Lower leg skin (tissue), 4 donors: ENCODE measurements at regions of chr14 and their contacts with region 1.

Region 1: GRCh38 chr14:99884834-99885648 is 91.8 kb downstream of the EML1 start:
- DNase-seq: no peak
- H3K4me3 ChIP-seq: no peak overlapping the region
- CTCF ChIP-seq: peak in 1 of 3 donors; percentile 15
- POLR2A ChIP-seq: no peak

Region 2: GRCh38 chr14:99518441-99519346 is 366.3 kb before region 1 on chr14:
- intact Hi-C with region 1: loop called (anchors 10 kb)
- DNase-seq: peak; percentile 61 to 95
- H3K4me3 ChIP-seq: no peak overlapping the region
- CTCF ChIP-seq: peak in 1 of 3 donors; percentile 89
- POLR2A ChIP-seq: no peak

Region 3: DNA sequence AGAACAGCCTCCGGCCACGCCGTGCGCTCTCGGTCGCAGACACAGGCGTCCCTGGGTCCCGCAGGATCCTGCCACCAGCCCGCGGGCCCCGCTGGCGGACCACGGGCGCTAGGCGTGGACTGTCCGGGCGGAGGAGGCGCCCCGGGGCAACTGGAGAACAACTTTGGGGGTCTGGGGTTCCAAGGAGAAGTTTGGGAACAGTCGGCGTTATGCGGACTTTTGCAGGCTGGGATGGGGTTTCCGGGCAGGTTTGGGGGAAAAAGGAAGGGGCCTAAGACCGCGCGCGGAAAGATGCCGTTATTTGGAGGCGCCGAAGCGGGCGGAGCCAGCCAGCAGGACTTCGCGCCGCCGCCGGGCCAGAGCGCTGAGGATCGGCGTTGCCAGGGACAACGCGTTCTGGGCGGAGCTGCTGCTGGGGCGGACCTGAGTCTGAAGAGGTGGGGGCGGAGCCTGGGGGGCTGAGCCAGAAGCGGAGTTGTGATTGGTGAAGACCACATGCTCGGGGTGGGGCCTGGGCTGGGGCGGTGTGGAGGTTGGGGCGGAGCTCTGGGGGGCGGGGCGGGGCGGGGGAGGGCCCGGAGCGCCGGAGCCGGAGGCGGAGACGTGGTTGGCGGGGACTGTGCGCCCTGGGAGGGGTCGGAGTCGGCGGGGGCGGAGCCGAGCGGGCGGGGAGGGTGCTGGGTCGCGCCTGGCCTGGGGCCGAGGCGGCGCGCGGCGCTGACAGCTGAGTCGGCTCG is 201.3 kb before region 1 on chr14 and contains the start of gene CYP46A1:
- intact Hi-C with region 1: loop called (anchors 5 kb)
- DNase-seq: peak; percentile 100
- H3K4me3 ChIP-seq: peak within 1 kb of the TSS; percentile 76
- CTCF ChIP-seq: no peak
- POLR2A ChIP-seq: no peak
- total RNA-seq, gene CYP46A1: 0.13 to 4.7 (median 0.55) TPM in 3 of 4 donors, not detected in the other

Region 4: DNA sequence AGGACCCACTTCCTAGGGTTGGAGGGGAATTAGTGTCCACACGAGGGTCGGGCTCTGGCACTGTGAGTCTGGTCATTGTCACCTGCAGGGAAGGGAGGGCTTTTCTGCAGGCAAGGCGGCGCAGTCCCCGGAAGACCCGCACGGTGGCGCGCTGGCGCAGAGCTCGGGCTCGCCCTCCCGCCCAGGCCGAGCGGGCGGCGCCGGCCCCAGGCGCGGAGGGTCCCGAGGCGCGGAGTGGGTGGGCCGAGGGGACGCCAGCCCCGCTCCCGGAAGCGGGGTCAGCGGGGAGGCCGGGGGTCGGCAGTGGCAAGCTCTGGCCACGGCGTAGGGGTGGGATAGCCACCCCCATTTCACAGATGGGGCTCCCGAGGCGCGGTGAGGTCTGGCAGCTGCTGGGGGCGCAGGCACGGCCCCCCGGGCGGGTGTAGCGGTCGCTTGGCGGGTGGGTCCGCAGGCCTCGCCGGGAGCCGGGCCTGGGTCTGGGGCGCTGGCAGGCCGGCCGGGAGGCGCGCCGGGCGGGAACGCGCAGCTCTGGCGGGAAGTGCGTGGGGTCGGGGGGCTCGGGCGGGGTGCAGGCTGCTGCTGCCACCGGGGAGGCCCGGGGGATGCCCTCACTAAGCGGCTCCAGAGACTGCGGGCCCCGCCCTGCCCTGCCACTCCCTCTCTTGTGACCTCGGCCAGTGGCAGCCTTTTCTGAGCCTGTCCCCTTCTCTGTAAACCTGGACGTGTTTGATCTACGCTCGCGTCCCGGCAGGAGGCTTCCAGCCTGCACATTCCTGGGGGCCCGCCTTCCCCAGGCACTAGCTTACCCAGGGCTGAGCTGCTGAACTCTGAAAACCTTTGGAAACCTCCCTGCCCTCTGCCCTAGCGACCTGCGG is 154.8 kb before region 1 on chr14:
- intact Hi-C with region 1: loop called (anchors 5 kb)
- DNase-seq: peak in 1 of 2 donors; percentile 91
- H3K4me3 ChIP-seq: no peak overlapping the region
- CTCF ChIP-seq: no peak
- POLR2A ChIP-seq: no peak